T-cell (primary cell): ENCODE measurements at regions of chr2 and their contacts with region 1.

Region 1: DNA sequence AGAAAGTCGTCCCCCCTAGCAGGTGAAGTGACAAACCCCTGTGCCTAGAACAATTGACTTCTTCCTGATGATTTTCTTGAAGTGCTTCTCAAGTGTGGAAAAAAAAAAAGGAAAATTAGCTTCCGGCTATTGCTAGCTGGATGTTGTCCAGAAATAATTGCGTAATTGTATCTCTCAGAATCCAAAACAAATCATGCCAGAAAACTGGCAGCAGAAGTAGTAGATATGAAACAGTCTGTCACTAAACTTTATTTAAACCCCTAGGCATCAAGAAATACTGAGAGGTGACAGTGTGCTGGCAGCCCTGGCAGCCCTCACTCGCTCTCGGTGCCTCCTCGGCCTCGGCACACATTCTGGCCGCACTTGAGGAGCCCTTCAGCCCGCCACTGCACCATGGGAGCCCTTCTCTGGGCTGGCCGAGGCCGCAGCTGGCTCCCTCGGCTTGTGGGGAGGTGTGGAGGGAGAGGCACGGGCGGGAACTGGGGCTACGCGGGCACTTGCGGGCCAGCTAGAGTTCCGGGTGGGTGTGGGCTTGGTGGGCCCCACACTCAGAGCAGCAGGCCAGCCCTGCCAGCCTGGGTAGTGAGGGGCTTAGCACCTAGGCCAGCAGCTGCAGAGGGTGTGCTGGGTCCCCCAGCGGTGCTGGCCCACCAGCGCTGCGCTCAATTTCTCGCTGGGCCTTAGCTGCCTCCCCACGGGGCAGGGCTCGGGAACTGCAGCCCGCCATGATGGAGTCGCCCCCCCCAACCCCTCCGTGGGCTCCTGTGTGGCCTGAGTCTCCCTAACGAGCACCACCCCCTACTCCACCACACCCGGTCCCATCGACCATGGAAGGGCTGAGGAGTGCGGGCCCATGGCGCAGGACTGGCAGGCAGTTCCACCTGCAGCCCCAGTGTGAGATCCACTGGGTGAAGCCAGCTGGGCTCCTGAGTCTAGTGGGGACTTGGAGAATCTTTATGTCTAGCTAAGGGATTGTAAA is 80.5 kb upstream of the ABCA12 start:
- DNase-seq: no peak
- ATAC-seq: no peak
- H3K4me3 ChIP-seq: no peak overlapping the region
- H3K4me3 Mint-ChIP-seq: no peak overlapping the region
- H3K27ac ChIP-seq: no peak overlapping the region
- H3K27ac Mint-ChIP-seq: no peak overlapping the region
- H3K4me1 ChIP-seq: no peaks in the 10 kb centered on the region
- H3K4me1 Mint-ChIP-seq: no peaks in the 10 kb centered on the region
- H3K27me3 ChIP-seq: peaks cover 0 to 7% of the 10 kb centered on the region in 2 experiments
- H3K27me3 Mint-ChIP-seq: peaks cover 6 to 8% of the 10 kb centered on the region in 2 donors

Region 2: GRCh38 chr2:215425021-215425782 is 206.3 kb after region 1 on chr2:
- CTCF ChIA-PET with region 1: no interaction called
- POLR2A ChIA-PET with region 1: no interaction called
- DNase-seq: no peak
- ATAC-seq: no peak
- H3K4me3 ChIP-seq: no peak overlapping the region
- H3K4me3 Mint-ChIP-seq: no peak overlapping the region
- H3K27ac ChIP-seq: no peak overlapping the region
- H3K27ac Mint-ChIP-seq: no peak overlapping the region
- H3K4me1 ChIP-seq: no peaks in the 10 kb centered on the region
- H3K4me1 Mint-ChIP-seq: no peaks in the 10 kb centered on the region
- H3K27me3 ChIP-seq: peaks cover 2 to 3% of the 10 kb centered on the region in 2 experiments
- H3K27me3 Mint-ChIP-seq: peaks cover 41 to 43% of the 10 kb centered on the region in 2 donors

Region 3: DNA sequence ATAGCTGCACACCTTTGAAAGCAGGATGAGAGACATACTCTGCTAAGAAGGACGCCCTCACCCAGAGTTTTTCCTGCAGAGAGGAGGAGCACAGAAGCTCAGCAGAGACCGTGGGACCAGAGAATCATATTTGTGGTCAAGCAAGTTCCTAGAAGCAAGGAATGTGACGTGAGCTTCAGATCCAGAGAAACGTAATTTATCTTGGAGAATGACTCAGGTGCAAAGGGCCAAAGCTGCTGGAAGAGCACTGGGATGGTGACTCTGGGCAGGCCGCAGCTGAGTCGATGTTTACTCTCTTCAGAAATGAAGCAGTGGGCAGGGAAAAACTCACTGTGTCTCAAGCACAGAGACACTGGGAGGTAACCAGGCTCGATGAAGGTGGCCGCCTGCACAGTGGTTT is 1364.3 kb after region 1 on chr2:
- CTCF ChIA-PET with region 1: no interaction called
- POLR2A ChIA-PET with region 1: interaction called in 1 of 2 experiments, 10 read pairs
- DNase-seq: no peak
- ATAC-seq: no peak
- H3K4me3 ChIP-seq: no peak overlapping the region
- H3K4me3 Mint-ChIP-seq: no peak overlapping the region
- H3K27ac ChIP-seq: no peak overlapping the region
- H3K27ac Mint-ChIP-seq: no peak overlapping the region
- H3K4me1 ChIP-seq: no peaks in the 10 kb centered on the region
- H3K4me1 Mint-ChIP-seq: no peaks in the 10 kb centered on the region
- H3K27me3 ChIP-seq: peaks cover 0 to 26% of the 10 kb centered on the region in 2 experiments
- H3K27me3 Mint-ChIP-seq: peaks cover 32% of the 10 kb centered on the region in 2 donors